ENCODE measurements at regions of chr5 and their contacts with region 1.

Region 1: DNA sequence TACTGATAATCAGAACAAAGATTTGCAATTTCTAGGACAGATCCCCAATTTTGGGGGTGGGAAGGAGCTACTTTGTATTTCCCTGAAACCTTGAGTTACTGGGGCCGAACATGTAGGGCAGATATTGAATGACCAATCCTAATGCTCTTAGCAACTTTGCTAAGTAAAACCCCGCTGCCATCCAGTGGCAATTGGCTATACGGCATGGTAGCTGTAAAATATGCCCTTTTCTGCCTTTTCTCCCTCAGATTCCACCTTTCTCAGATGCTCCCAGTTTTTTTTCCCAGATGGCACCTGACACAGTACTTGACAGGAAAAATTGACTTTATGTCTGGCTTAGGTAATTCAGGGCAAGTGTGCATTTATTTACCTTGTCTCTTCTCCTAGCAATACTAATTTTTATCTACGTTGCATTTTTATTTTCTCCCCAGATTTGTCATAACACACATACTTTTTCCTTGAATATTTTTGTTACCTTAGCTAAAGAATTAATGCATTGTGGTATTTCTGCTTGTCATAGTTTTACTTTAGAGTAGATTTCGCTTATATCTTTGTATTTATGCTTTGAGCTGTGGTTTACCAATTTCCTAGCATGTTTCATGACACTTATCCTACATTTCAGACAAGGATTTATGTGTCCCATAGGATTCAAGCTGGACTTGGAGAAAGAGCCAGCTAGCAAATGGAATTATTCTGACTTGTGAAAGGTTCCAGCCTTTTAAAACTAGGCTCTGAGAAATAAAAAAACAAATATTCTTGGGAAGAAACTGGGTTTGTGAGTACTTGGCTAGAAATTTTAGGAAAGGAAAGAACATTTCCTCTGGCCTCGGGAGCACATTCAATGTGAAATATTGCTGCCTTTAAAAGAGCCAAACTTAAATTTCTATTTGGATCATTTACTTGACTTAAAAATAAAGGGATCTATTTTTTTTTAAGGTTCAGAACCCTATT is 37.4 kb downstream of the PIK3R1 start:
- DNase-seq: no peak
- H3K4me3 ChIP-seq: no peak overlapping the region
- H3K27me3 ChIP-seq: no peaks in the 10 kb centered on the region
- CTCF ChIP-seq: peak; percentile 77

Region 2: DNA sequence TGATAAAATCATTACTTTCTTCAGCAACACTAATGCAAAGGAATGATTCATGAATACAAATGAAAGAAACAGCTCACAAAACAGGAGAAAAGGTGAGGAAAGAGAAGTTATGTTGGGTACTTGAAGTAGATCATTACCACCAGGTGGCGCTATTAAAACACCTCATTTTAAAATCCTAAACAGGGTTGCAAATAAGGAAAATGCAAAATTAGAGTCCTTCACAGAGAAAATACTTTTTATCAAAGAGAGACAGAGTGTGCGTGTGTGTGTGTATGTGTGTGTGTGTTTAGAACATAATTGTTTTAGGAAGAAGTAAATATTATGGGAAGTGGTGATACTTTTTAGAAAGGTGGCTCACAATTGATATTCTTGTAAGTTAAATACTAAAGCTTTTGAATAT is 1006.8 kb before region 1 on chr5:
- CTCF ChIA-PET with region 1: interaction called, 36 read pairs
- POLR2A ChIA-PET with region 1: no interaction called
- DNase-seq: no peak
- H3K4me3 ChIP-seq: no peak overlapping the region
- H3K27me3 ChIP-seq: no peaks in the 10 kb centered on the region
- CTCF ChIP-seq: peak; percentile 52

Measured in BJ (cell line).